ENCODE measurements at regions of chr6 and their contacts with region 1.

Region 1: DNA sequence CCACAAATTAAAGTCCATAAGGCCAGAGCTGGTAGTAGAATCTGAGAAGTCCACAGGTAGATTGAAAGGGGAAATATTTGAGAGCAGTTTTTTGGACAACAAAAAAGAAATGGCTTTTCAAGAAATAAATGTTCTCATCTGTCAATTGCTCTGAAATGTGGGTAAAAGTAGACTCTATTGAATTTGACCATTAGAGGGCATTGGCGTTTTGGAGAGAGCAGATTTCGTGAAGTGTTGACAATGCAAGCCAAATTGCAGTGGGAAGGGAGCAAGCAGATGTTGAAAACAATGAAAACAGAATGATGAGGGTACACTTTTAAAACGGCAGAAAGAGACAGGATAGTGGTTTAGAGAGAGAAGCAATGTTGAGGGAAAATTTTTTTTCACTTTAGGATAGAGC is 149.1 kb upstream of the FAM83B start:
- DNase-seq: peak; percentile 37
- H3K4me3 ChIP-seq: no peak overlapping the region
- H3K27ac ChIP-seq: no peak overlapping the region
- H3K4me1 ChIP-seq: peaks cover 23% of the 10 kb centered on the region
- H3K27me3 ChIP-seq: no peaks in the 10 kb centered on the region
- CTCF ChIP-seq: peak; percentile 46 to 67

Region 2: GRCh38 chr6:54515013-54515412 is 182.4 kb before region 1 on chr6:
- CTCF ChIA-PET with region 1: no interaction called
- dilution Hi-C with region 1: no loop called
- in situ Hi-C with region 1: no loop called
- intact Hi-C with region 1: loop called (anchors 10 kb)
- DNase-seq: peak; percentile 54
- H3K4me3 ChIP-seq: no peak overlapping the region
- H3K27ac ChIP-seq: no peak overlapping the region
- H3K4me1 ChIP-seq: peaks cover 4% of the 10 kb centered on the region
- H3K27me3 ChIP-seq: no peaks in the 10 kb centered on the region
- CTCF ChIP-seq: peak in 1 of 2 donors; percentile 33

Region 3: GRCh38 chr6:54710456-54710855 is 13.0 kb after region 1 on chr6:
- CTCF ChIA-PET with region 1: no interaction called
- dilution Hi-C with region 1: no loop called
- in situ Hi-C with region 1: no loop called
- intact Hi-C with region 1: no loop called
- DNase-seq: no peak
- H3K4me3 ChIP-seq: no peak overlapping the region
- H3K27ac ChIP-seq: no peak overlapping the region
- H3K4me1 ChIP-seq: no peaks in the 10 kb centered on the region
- H3K27me3 ChIP-seq: no peaks in the 10 kb centered on the region
- CTCF ChIP-seq: no peak

Region 4: DNA sequence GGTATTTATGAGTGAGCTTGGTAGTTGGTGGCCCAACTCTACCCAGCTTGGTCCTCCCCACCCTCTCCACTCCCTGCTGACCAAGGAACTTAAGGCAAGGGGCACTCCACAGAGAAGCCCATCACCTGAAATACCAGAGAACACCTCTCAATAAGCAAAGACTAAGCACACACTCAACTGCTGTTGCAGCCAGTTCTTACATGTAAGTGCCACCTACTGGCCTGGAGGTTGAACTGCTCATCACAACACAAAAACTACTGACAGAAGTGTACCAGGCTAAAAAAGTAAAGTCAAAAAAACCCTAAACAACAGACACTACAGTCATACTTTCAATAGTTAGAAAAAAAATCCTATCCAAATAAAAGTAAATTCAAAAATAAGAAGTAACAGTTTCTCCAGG is 295.4 kb after region 1 on chr6:
- CTCF ChIA-PET with region 1: no interaction called
- dilution Hi-C with region 1: no loop called
- in situ Hi-C with region 1: no loop called
- intact Hi-C with region 1: loop called (anchors 5 kb)
- DNase-seq: no peak
- H3K4me3 ChIP-seq: no peak overlapping the region
- H3K27ac ChIP-seq: no peak overlapping the region
- H3K4me1 ChIP-seq: no peaks in the 10 kb centered on the region
- H3K27me3 ChIP-seq: no peaks in the 10 kb centered on the region
- CTCF ChIP-seq: peak; percentile 55 to 77